Ascending aorta (tissue), 2 donors: ENCODE measurements at regions of chr1 and their contacts with region 1.

Region 1: GRCh38 chr1:156510709-156511108 is 10.1 kb upstream of the MEF2D start:
- DNase-seq: peak in 1 of 2 donors; percentile 96
- H3K4me3 ChIP-seq: no peak overlapping the region
- H3K27ac ChIP-seq: peak overlapping the region; percentile 86 to 100
- H3K4me1 ChIP-seq: peaks cover 16 to 36% of the 10 kb centered on the region in 2 donors
- H3K27me3 ChIP-seq: no peaks in the 10 kb centered on the region
- CTCF ChIP-seq: no peak

Region 2: DNA sequence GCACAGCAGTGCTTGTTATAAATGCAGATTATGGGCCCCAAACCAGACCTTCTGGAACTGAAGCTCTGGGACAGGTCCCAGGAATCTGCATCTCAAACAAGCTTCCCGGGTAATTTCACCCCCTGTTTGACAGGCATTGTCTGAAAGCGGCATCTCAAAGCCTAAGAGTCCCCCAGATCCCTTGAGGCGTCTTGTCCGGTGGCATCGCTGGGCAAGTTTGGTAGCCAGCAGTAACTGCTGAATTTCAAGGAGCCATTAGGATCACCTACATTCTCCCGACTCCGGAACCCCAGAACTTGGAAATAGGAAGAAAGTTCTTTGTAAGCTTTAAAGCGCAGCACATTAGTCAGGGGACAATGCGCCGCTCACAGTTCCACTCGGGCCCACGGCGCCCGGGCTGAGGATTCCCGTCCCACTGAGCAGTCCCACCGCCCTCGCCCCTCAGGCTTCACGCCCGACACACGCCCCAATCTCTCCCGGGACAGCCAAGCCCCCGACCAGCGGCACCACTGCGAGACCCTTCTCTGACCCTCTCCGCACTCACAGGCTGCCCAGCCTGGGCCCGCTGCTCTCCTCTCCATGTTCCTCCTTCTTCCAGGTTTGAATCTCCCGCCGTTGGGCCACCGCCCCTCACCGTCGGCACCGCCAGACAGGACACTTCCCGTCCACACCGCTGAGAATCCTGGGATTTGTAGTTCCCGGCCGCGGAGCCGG is 61.4 kb after region 1 on chr1 and contains the start of gene IQGAP3:
- intact Hi-C with region 1: loop called (anchors 2 kb)
- DNase-seq: peak; percentile 48 to 91
- H3K4me3 ChIP-seq: peak within 1 kb of the TSS; percentile 27 to 54
- H3K27ac ChIP-seq: no peak within 1 kb of the TSS
- H3K4me1 ChIP-seq: peaks cover 0 to 5% of the 10 kb centered on the region in 2 donors
- H3K27me3 ChIP-seq: no peaks in the 10 kb centered on the region
- CTCF ChIP-seq: no peak
- total RNA-seq, gene IQGAP3: not detected